ENCODE measurements at regions of chr3 and their contacts with region 1.

Region 1: DNA sequence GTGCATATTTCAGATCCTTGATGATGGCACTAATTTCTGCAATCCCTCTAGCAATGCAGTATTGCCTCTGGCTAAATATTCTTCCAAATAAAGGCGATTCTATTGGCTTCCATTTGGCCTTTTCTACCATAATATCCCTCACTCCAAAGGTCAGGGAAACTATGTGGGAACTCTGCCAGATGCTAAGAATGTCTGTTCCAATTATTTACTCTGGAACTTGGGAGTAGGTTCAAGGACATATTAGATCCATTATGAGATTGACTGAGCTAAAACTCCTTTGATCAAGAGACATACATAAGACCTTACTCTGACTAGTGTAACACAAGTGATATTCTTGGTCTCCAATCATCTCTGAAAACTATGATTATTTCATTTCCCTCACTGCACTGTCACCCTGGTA is 674.5 kb upstream of the NECTIN3 start:
- DNase-seq: no peak
- ATAC-seq: no peak
- H3K4me3 ChIP-seq: no peak overlapping the region
- H3K4me3 Mint-ChIP-seq: no peak overlapping the region
- H3K27ac ChIP-seq: no peak overlapping the region
- H3K27ac Mint-ChIP-seq: no peak overlapping the region
- H3K4me1 ChIP-seq: no peaks in the 10 kb centered on the region
- H3K4me1 Mint-ChIP-seq: no peaks in the 10 kb centered on the region
- H3K27me3 ChIP-seq: no peaks in the 10 kb centered on the region
- H3K27me3 Mint-ChIP-seq: peaks cover 0 to 4% of the 10 kb centered on the region in 2 donors

Region 2: GRCh38 chr3:110234831-110235230 is 162.3 kb before region 1 on chr3:
- CTCF ChIA-PET with region 1: interaction called in 1 of 2 experiments, 10 read pairs
- POLR2A ChIA-PET with region 1: no interaction called
- DNase-seq: no peak
- ATAC-seq: no peak
- H3K4me3 ChIP-seq: no peak overlapping the region
- H3K4me3 Mint-ChIP-seq: no peak overlapping the region
- H3K27ac ChIP-seq: no peak overlapping the region
- H3K27ac Mint-ChIP-seq: no peak overlapping the region
- H3K4me1 ChIP-seq: no peaks in the 10 kb centered on the region
- H3K4me1 Mint-ChIP-seq: no peaks in the 10 kb centered on the region
- H3K27me3 ChIP-seq: no peaks in the 10 kb centered on the region
- H3K27me3 Mint-ChIP-seq: peaks cover 0 to 8% of the 10 kb centered on the region in 2 donors

Region 3: GRCh38 chr3:110285027-110285426 is 112.1 kb before region 1 on chr3:
- CTCF ChIA-PET with region 1: no interaction called
- POLR2A ChIA-PET with region 1: no interaction called
- DNase-seq: no peak
- ATAC-seq: no peak
- H3K4me3 ChIP-seq: no peak overlapping the region
- H3K4me3 Mint-ChIP-seq: no peak overlapping the region
- H3K27ac ChIP-seq: no peak overlapping the region
- H3K27ac Mint-ChIP-seq: no peak overlapping the region
- H3K4me1 ChIP-seq: no peaks in the 10 kb centered on the region
- H3K4me1 Mint-ChIP-seq: no peaks in the 10 kb centered on the region
- H3K27me3 ChIP-seq: no peaks in the 10 kb centered on the region
- H3K27me3 Mint-ChIP-seq: no peaks in the 10 kb centered on the region

Region 4: GRCh38 chr3:110384601-110385000 is 12.5 kb before region 1 on chr3:
- CTCF ChIA-PET with region 1: no interaction called
- POLR2A ChIA-PET with region 1: no interaction called
- DNase-seq: no peak
- ATAC-seq: no peak
- H3K4me3 ChIP-seq: no peak overlapping the region
- H3K4me3 Mint-ChIP-seq: no peak overlapping the region
- H3K27ac ChIP-seq: no peak overlapping the region
- H3K27ac Mint-ChIP-seq: no peak overlapping the region
- H3K4me1 ChIP-seq: no peaks in the 10 kb centered on the region
- H3K4me1 Mint-ChIP-seq: no peaks in the 10 kb centered on the region
- H3K27me3 ChIP-seq: no peaks in the 10 kb centered on the region
- H3K27me3 Mint-ChIP-seq: no peaks in the 10 kb centered on the region